Panc1 (cell line): ENCODE measurements at regions of chr3 and their contacts with region 1.

Region 1: GRCh38 chr3:153026026-153026425 is 136.0 kb upstream of the RAP2B start:
- DNase-seq: no peak
- ATAC-seq: no peak
- H3K4me3 ChIP-seq: no peak overlapping the region
- H3K27ac ChIP-seq: no peak overlapping the region
- H3K4me1 ChIP-seq: no peaks in the 10 kb centered on the region
- H3K27me3 ChIP-seq: peaks cover 3% of the 10 kb centered on the region; the same call in 1 of the 2 replicates
- CTCF ChIP-seq: peak; percentile 71; the same call in 1 of the 2 replicates

Region 2: GRCh38 chr3:152606146-152606545 is 419.9 kb before region 1 on chr3:
- CTCF ChIA-PET with region 1: no interaction called
- POLR2A ChIA-PET with region 1: no interaction called
- in situ Hi-C with region 1: no loop called
- intact Hi-C with region 1: no loop called
- DNase-seq: no peak
- ATAC-seq: no peak
- H3K4me3 ChIP-seq: no peak overlapping the region
- H3K27ac ChIP-seq: no peak overlapping the region
- H3K4me1 ChIP-seq: no peaks in the 10 kb centered on the region
- H3K27me3 ChIP-seq: no peaks in the 10 kb centered on the region
- CTCF ChIP-seq: no peak

Region 3: GRCh38 chr3:153595186-153595815 is 569.3 kb after region 1 on chr3:
- CTCF ChIA-PET with region 1: no interaction called
- POLR2A ChIA-PET with region 1: no interaction called
- in situ Hi-C with region 1: no loop called
- intact Hi-C with region 1: loop called (anchors 2 kb)
- DNase-seq: peak; percentile 32
- ATAC-seq: peak; percentile 92
- H3K4me3 ChIP-seq: no peak overlapping the region
- H3K27ac ChIP-seq: no peak overlapping the region
- H3K4me1 ChIP-seq: no peaks in the 10 kb centered on the region
- H3K27me3 ChIP-seq: no peaks in the 10 kb centered on the region
- CTCF ChIP-seq: peak; percentile 79; the same call in 1 of the 2 replicates

Region 4: GRCh38 chr3:153768561-153769469 is 742.8 kb after region 1 on chr3:
- CTCF ChIA-PET with region 1: no interaction called
- POLR2A ChIA-PET with region 1: no interaction called
- in situ Hi-C with region 1: no loop called
- intact Hi-C with region 1: loop called (anchors 5 kb)
- DNase-seq: peak; percentile 39
- ATAC-seq: peak; percentile 93
- H3K4me3 ChIP-seq: no peak overlapping the region
- H3K27ac ChIP-seq: no peak overlapping the region
- H3K4me1 ChIP-seq: no peaks in the 10 kb centered on the region
- H3K27me3 ChIP-seq: no peaks in the 10 kb centered on the region
- CTCF ChIP-seq: peak; percentile 91

Region 5: GRCh38 chr3:153927107-153927506 is 901.1 kb after region 1 on chr3:
- CTCF ChIA-PET with region 1: no interaction called
- POLR2A ChIA-PET with region 1: no interaction called
- in situ Hi-C with region 1: no loop called
- intact Hi-C with region 1: loop called (anchors 10 kb)
- DNase-seq: no peak
- ATAC-seq: no peak
- H3K4me3 ChIP-seq: no peak overlapping the region
- H3K27ac ChIP-seq: no peak overlapping the region
- H3K4me1 ChIP-seq: no peaks in the 10 kb centered on the region
- H3K27me3 ChIP-seq: peaks cover 2% of the 10 kb centered on the region; the same call in 1 of the 2 replicates
- CTCF ChIP-seq: peak; percentile 13; the same call in 1 of the 2 replicates

Region 6: GRCh38 chr3:154252759-154253638 is 1227.0 kb after region 1 on chr3:
- CTCF ChIA-PET with region 1: no interaction called
- POLR2A ChIA-PET with region 1: no interaction called
- in situ Hi-C with region 1: no loop called
- intact Hi-C with region 1: loop called (anchors 10 kb)
- DNase-seq: peak; percentile 55
- ATAC-seq: peak; percentile 96
- H3K4me3 ChIP-seq: no peak overlapping the region
- H3K27ac ChIP-seq: no peak overlapping the region
- H3K4me1 ChIP-seq: no peaks in the 10 kb centered on the region
- H3K27me3 ChIP-seq: no peaks in the 10 kb centered on the region
- CTCF ChIP-seq: peak; percentile 90